ENCODE measurements at regions of chr4 and their contacts with region 1.

Region 1: DNA sequence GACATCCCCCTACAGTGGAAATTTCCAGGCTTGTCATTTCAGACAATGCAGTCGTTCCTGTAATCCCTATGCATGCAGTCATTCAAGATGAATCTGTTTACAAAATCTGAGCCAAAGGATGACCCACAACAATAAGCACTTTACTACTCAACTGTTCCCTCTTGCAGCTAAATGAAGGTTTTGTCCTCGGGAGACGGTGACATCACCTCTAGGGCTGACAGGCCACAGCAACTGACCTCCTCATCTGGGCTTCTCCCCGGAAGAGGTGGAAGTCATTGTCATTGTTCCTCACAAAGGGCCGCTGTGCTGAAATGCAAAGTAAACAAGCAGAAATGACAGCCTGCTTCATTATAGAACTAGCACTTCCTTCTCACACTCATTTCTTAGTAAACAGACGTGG is 29.2 kb downstream of the CLRN2 start:
- DNase-seq: peak; percentile 29 to 61 (median 50)
- H3K4me3 ChIP-seq: no peak overlapping the region
- H3K4me3 Mint-ChIP-seq: no peak overlapping the region
- H3K27ac ChIP-seq: no peak overlapping the region
- H3K27ac Mint-ChIP-seq: no peak overlapping the region
- H3K4me1 ChIP-seq: no peaks in the 10 kb centered on the region
- H3K4me1 Mint-ChIP-seq: peaks cover 7% of the 10 kb centered on the region
- H3K27me3 ChIP-seq: no peaks in the 10 kb centered on the region
- H3K27me3 Mint-ChIP-seq: peaks cover 0 to 3% (median 0%) of the 10 kb centered on the region in 3 donors
- CTCF ChIP-seq: no peak

Region 2: GRCh38 chr4:17636696-17637622 is 92.8 kb after region 1 on chr4:
- intact Hi-C with region 1: loop called (anchors 2 kb)
- DNase-seq: peak; percentile 51 to 70 (median 63)
- H3K4me3 ChIP-seq: no peak overlapping the region
- H3K4me3 Mint-ChIP-seq: no peak overlapping the region
- H3K27ac ChIP-seq: no peak overlapping the region
- H3K27ac Mint-ChIP-seq: peak overlapping the region in 1 of 7 donors; percentile 77
- H3K4me1 ChIP-seq: no peaks in the 10 kb centered on the region
- H3K4me1 Mint-ChIP-seq: peaks cover 3% of the 10 kb centered on the region
- H3K27me3 ChIP-seq: no peaks in the 10 kb centered on the region
- H3K27me3 Mint-ChIP-seq: no peaks in the 10 kb centered on the region
- CTCF ChIP-seq: peak; percentile 96

Region 3: DNA sequence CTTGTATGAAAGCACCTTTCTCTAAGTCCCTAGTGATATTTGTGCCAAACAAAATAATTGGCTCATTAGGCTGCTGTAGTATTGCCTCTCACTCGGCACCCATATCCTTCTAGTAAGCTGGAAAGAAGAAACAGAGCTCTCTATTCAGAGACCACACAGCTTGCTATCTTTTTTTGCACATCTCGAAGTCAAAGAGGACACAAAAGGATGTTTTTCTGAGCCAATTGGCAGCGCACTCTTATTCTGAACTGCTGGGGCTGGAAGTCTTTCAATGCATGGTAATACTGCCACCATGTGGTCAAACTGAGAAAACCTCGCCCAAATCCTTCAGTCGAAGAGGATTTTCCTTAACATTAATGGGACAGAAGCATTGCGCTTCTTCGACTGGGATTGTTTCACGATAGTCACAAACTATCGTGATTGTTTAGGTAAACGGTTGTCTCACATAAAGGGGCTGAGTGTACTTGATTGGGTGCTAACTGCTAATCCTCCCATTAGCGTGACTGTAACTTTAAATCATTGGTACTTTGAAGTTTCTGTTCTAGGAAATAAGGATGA is 1049.3 kb after region 1 on chr4:
- intact Hi-C with region 1: loop called (anchors 5 to 10 kb)
- DNase-seq: peak; percentile 11 to 39 (median 34)
- H3K4me3 ChIP-seq: no peak overlapping the region
- H3K4me3 Mint-ChIP-seq: no peak overlapping the region
- H3K27ac ChIP-seq: no peak overlapping the region
- H3K27ac Mint-ChIP-seq: no peak overlapping the region
- H3K4me1 ChIP-seq: no peaks in the 10 kb centered on the region
- H3K4me1 Mint-ChIP-seq: peaks cover 4% of the 10 kb centered on the region
- H3K27me3 ChIP-seq: no peaks in the 10 kb centered on the region
- H3K27me3 Mint-ChIP-seq: peaks cover 1 to 5% (median 3%) of the 10 kb centered on the region in 3 donors
- CTCF ChIP-seq: peak; percentile 73